ENCODE measurements at regions of chr21 and their contacts with region 1.

Region 1: DNA sequence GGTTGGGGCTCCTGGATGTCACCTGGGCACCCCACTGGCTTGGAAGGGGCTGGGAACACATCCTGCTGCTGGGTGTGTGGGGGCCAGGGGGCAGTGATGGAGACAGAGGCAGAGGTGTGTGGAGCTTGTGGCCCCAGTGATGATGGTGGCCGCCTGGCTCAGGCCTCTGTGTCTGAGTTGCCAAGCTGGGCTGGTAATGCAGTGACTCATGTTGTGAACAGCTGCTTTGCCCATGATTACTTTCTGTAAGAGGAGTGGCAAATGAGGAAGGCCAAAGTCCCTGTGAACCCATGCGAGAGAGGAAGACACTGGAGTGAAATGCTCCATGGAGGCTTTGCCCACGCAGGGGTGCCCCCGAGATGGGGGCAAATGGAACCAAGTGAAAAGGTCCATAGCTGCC is 86.8 kb downstream of the KCNJ6 start:
- DNase-seq: no peak

Region 2: DNA sequence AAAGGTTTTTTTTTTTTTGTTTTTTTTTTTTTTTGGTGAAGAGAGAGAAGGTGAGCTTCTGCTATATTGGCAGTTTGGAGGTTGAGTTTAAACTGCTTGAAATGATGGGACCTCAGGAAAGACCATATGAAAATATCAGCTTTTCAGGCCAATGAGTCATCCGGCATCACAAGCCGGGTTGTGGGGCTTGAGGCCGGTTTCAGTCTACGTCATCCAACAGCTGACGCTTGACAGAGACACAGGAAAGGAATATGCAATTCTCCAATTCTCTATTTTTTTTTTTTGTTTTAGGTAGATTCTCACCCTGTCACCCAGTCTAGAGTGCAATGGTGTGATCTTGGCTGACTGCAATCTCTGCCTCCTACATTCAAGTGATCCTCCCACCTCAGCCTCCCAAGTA is 34.4 kb after region 1 on chr21:
- intact Hi-C with region 1: loop called in 1 of 2 experiments (anchors 2 kb)
- DNase-seq: peak; percentile 84

Region 3: DNA sequence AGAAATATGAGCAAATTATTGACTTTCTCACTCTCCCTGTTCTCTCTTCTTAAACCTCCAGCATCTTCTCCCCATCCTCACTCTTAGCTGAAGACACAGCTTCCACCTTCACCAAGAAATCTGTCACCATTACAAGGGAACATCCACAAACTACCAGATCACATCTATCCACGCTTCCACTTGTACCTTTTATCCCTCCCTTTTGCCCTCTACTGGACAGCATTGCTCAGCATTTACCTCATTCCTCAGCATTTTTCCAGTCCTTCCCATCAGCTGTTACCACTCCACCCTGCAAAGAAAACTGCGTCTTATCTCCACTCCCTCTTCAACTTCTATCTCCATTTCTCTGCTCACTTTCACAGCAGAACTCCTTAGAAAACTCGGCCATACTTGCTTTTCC is 44.2 kb after region 1 on chr21:
- intact Hi-C with region 1: loop called in 1 of 2 experiments (anchors 2 kb)
- DNase-seq: no peak

Measured in posterior vena cava (tissue), 2 donors.